Posterior vena cava (tissue), 2 donors: ENCODE measurements at regions of chr20 and their contacts with region 1.

Region 1: GRCh38 chr20:56497326-56497725 is 27.2 kb upstream of the FAM209A start:
- DNase-seq: no peak

Region 2: GRCh38 chr20:56522311-56522710 is 25.0 kb after region 1 on chr20:
- intact Hi-C with region 1: loop called in 1 of 2 experiments (anchors 1 kb)
- DNase-seq: peak; percentile 58